ENCODE measurements at regions of chr2 and their contacts with region 1.

Region 1: GRCh38 chr2:108635630-108636354 is 83.5 kb upstream of the RANBP2 start:
- DNase-seq: no peak
- H3K4me3 ChIP-seq: no peak overlapping the region
- H3K27ac ChIP-seq: no peak overlapping the region
- H3K4me1 ChIP-seq: peaks cover 21% of the 10 kb centered on the region
- H3K27me3 ChIP-seq: no peaks in the 10 kb centered on the region
- CTCF ChIP-seq: no peak
- POLR2A ChIP-seq: no peak

Region 2: GRCh38 chr2:106977717-106978116 is 1658.1 kb before region 1 on chr2:
- intact Hi-C with region 1: no loop called
- DNase-seq: no peak
- H3K4me3 ChIP-seq: no peak overlapping the region
- H3K27ac ChIP-seq: no peak overlapping the region
- H3K4me1 ChIP-seq: no peaks in the 10 kb centered on the region
- H3K27me3 ChIP-seq: no peaks in the 10 kb centered on the region
- CTCF ChIP-seq: no peak
- POLR2A ChIP-seq: no peak

Region 3: DNA sequence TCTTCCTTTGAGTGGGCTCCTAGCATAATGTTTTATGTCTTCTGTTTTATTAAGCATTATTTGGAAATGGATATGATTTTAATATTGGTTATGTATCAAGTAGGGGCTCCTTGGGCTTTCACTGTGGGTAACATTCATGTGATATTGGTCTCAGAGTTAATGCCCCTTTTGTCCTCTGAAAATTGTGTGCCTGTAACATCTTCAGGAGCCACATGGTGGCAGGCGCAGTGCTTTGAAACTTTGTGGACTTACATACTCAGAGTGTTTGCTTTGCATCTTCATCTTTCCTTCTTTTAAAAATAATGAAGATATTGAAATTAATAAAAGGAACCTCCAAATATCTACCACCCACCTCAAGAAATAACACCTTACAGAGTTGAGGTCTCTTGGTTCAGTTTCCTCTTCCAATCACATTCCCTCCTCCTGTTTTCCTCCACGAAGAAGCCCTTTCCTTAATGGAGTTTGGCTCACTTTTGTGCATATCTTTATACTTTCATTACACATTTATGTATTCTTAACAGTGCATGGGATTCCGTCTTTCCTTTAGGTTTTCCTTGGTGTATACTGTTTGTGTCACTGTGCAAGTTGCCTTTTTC is 28.0 kb before region 1 on chr2:
- intact Hi-C with region 1: loop called (anchors 1 kb)
- DNase-seq: peak; percentile 36
- H3K4me3 ChIP-seq: no peak overlapping the region
- H3K27ac ChIP-seq: no peak overlapping the region
- H3K4me1 ChIP-seq: peaks cover 9% of the 10 kb centered on the region
- H3K27me3 ChIP-seq: no peaks in the 10 kb centered on the region
- CTCF ChIP-seq: peak; percentile 28 to 85 (median 62)
- POLR2A ChIP-seq: no peak

Region 4: DNA sequence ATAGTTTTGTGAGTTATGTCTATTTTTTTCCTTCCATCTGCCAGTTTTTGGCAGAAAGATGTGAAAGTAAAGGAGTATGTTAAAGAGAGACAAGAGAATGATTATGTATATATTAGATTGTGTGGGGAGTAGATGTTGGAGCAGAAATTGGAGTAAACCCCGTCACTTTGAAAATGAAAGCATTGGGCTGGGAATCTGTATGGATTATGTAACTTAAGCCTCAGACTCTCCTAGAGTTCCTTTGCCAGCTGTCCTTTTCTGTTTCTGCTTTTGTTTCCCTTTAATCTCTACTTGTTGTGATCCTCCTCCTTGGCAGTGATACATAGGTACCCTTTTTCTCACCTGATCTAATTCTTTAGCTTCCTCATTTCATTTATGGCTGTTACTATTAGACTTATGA is 170.0 kb after region 1 on chr2:
- intact Hi-C with region 1: no loop called
- DNase-seq: no peak
- H3K4me3 ChIP-seq: no peak overlapping the region
- H3K27ac ChIP-seq: no peak overlapping the region
- H3K4me1 ChIP-seq: no peaks in the 10 kb centered on the region
- H3K27me3 ChIP-seq: no peaks in the 10 kb centered on the region
- CTCF ChIP-seq: no peak
- POLR2A ChIP-seq: no peak

Region 5: GRCh38 chr2:109120166-109120565 is 484.4 kb after region 1 on chr2:
- intact Hi-C with region 1: no loop called
- DNase-seq: no peak
- H3K4me3 ChIP-seq: no peak overlapping the region
- H3K27ac ChIP-seq: no peak overlapping the region
- H3K4me1 ChIP-seq: no peaks in the 10 kb centered on the region
- H3K27me3 ChIP-seq: no peaks in the 10 kb centered on the region
- CTCF ChIP-seq: no peak
- POLR2A ChIP-seq: no peak